CD4-positive, alpha-beta memory T cell (primary cell): ENCODE measurements at regions of chr2 and their contacts with region 1.

Region 1: GRCh38 chr2:38602732-38603401 is at the start of gene HNRNPLL:
- DNase-seq: peak; percentile 92 to 94 (median 92)
- H3K4me3 ChIP-seq: peak within 1 kb of the TSS; percentile 64 to 71
- H3K4me3 Mint-ChIP-seq: peak within 1 kb of the TSS; percentile 96 to 98 (median 98)
- H3K27ac ChIP-seq: peak within 1 kb of the TSS; percentile 89
- H3K27ac Mint-ChIP-seq: peak within 1 kb of the TSS; percentile 81 to 99 (median 97)
- H3K4me1 ChIP-seq: peaks cover 46% of the 10 kb centered on the region
- H3K4me1 Mint-ChIP-seq: peaks cover 28 to 51% (median 40%) of the 10 kb centered on the region in 4 donors
- H3K27me3 ChIP-seq: no peaks in the 10 kb centered on the region
- H3K27me3 Mint-ChIP-seq: peaks cover 0 to 2% of the 10 kb centered on the region in 2 donors
- total RNA-seq, gene HNRNPLL: 103 to 105 TPM

Region 2: DNA sequence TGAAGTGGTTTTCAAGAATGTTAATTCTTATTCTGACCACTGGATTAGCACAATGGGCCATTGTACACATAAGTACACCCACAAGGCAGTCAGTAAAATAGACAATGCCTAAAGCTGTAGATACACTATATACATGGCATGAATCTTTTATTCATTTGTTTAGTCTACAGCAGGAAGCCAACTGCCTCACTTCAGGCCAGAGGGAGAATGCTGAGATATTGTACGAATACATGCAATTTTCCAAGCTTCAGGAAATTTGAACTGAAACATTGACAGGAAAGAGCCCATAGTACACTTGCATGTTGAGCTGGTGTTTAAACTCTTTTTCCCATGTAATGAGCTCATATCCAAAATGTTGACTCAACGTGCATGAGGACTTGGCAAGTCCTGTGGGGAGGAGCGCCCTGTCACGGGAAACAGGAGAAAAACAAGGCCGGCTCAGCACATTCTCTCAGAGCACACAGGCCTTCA is 415.3 kb before region 1 on chr2:
- CTCF ChIA-PET with region 1: no interaction called
- POLR2A ChIA-PET with region 1: no interaction called
- intact Hi-C with region 1: no loop called
- DNase-seq: no peak
- H3K4me3 ChIP-seq: no peak overlapping the region
- H3K4me3 Mint-ChIP-seq: no peak overlapping the region
- H3K27ac ChIP-seq: no peak overlapping the region
- H3K27ac Mint-ChIP-seq: no peak overlapping the region
- H3K4me1 ChIP-seq: no peaks in the 10 kb centered on the region
- H3K4me1 Mint-ChIP-seq: peaks cover 0 to 10% (median 5%) of the 10 kb centered on the region in 4 donors
- H3K27me3 ChIP-seq: no peaks in the 10 kb centered on the region
- H3K27me3 Mint-ChIP-seq: peaks cover 1 to 4% of the 10 kb centered on the region in 2 donors

Region 3: GRCh38 chr2:38535744-38536506 is 66.9 kb before region 1 on chr2:
- CTCF ChIA-PET with region 1: interaction called, 7 read pairs
- POLR2A ChIA-PET with region 1: no interaction called
- intact Hi-C with region 1: loop called (anchors 1 kb)
- DNase-seq: peak; percentile 60 to 77 (median 70)
- H3K4me3 ChIP-seq: peak overlapping the region; percentile 47 to 52
- H3K4me3 Mint-ChIP-seq: peak overlapping the region; percentile 25 to 77 (median 52)
- H3K27ac ChIP-seq: no peak overlapping the region
- H3K27ac Mint-ChIP-seq: peak overlapping the region in 1 of 7 donors; percentile 36
- H3K4me1 ChIP-seq: peaks cover 9% of the 10 kb centered on the region
- H3K4me1 Mint-ChIP-seq: peaks cover 0 to 6% (median 2%) of the 10 kb centered on the region in 4 donors
- H3K27me3 ChIP-seq: no peaks in the 10 kb centered on the region
- H3K27me3 Mint-ChIP-seq: peaks cover 0 to 2% of the 10 kb centered on the region in 2 donors

Region 4: GRCh38 chr2:38626326-38627035 is 23.6 kb after region 1 on chr2:
- CTCF ChIA-PET with region 1: interaction called, 34 read pairs
- POLR2A ChIA-PET with region 1: interaction called, 27 read pairs
- intact Hi-C with region 1: no loop called
- DNase-seq: peak; percentile 56 to 71 (median 64)
- H3K4me3 ChIP-seq: no peak overlapping the region
- H3K4me3 Mint-ChIP-seq: peak overlapping the region in 7 of 8 donors; percentile 22 to 70 (median 57)
- H3K27ac ChIP-seq: peak overlapping the region; percentile 7
- H3K27ac Mint-ChIP-seq: peak overlapping the region; percentile 43 to 89 (median 82)
- H3K4me1 ChIP-seq: peaks cover 21% of the 10 kb centered on the region
- H3K4me1 Mint-ChIP-seq: peaks cover 20 to 29% (median 26%) of the 10 kb centered on the region in 4 donors
- H3K27me3 ChIP-seq: no peaks in the 10 kb centered on the region
- H3K27me3 Mint-ChIP-seq: no peaks in the 10 kb centered on the region

Region 5: GRCh38 chr2:38665854-38666555 is 63.1 kb after region 1 on chr2 and contains the start of gene GALM:
- CTCF ChIA-PET with region 1: interaction called, 99 read pairs
- POLR2A ChIA-PET with region 1: interaction called, 227 read pairs
- intact Hi-C with region 1: loop called (anchors 1 kb)
- DNase-seq: peak; percentile 51 to 68 (median 62)
- H3K4me3 ChIP-seq: peak within 1 kb of the TSS; percentile 63 to 74
- H3K4me3 Mint-ChIP-seq: peak within 1 kb of the TSS; percentile 81 to 97 (median 94)
- H3K27ac ChIP-seq: peak within 1 kb of the TSS; percentile 73
- H3K27ac Mint-ChIP-seq: peak within 1 kb of the TSS; percentile 93 to 100 (median 98)
- H3K4me1 ChIP-seq: peaks cover 73% of the 10 kb centered on the region
- H3K4me1 Mint-ChIP-seq: peaks cover 47 to 80% (median 64%) of the 10 kb centered on the region in 4 donors
- H3K27me3 ChIP-seq: no peaks in the 10 kb centered on the region
- H3K27me3 Mint-ChIP-seq: no peaks in the 10 kb centered on the region
- total RNA-seq, gene GALM: 35.5 to 35.8 TPM

Region 6: GRCh38 chr2:38697125-38697840 is 94.4 kb after region 1 on chr2:
- CTCF ChIA-PET with region 1: interaction called, 25 read pairs
- POLR2A ChIA-PET with region 1: interaction called, 71 read pairs
- intact Hi-C with region 1: no loop called
- DNase-seq: peak; percentile 74 to 87 (median 75)
- H3K4me3 ChIP-seq: peak overlapping the region in 1 of 2 donors; percentile 0
- H3K4me3 Mint-ChIP-seq: peak overlapping the region; percentile 43 to 81 (median 76)
- H3K27ac ChIP-seq: peak overlapping the region; percentile 72
- H3K27ac Mint-ChIP-seq: peak overlapping the region; percentile 93 to 98 (median 97)
- H3K4me1 ChIP-seq: peaks cover 100% of the 10 kb centered on the region
- H3K4me1 Mint-ChIP-seq: peaks cover 52 to 92% (median 74%) of the 10 kb centered on the region in 4 donors
- H3K27me3 ChIP-seq: no peaks in the 10 kb centered on the region
- H3K27me3 Mint-ChIP-seq: no peaks in the 10 kb centered on the region

Region 7: GRCh38 chr2:38720613-38721241 is 117.9 kb after region 1 on chr2:
- CTCF ChIA-PET with region 1: interaction called, 93 read pairs
- POLR2A ChIA-PET with region 1: interaction called, 30 read pairs
- intact Hi-C with region 1: loop called (anchors 1 kb)
- DNase-seq: no peak
- H3K4me3 ChIP-seq: no peak overlapping the region
- H3K4me3 Mint-ChIP-seq: peak overlapping the region in 5 of 8 donors; percentile 22 to 44 (median 29)
- H3K27ac ChIP-seq: no peak overlapping the region
- H3K27ac Mint-ChIP-seq: peak overlapping the region; percentile 75 to 94 (median 89)
- H3K4me1 ChIP-seq: peaks cover 58% of the 10 kb centered on the region
- H3K4me1 Mint-ChIP-seq: peaks cover 39 to 68% (median 54%) of the 10 kb centered on the region in 4 donors
- H3K27me3 ChIP-seq: no peaks in the 10 kb centered on the region
- H3K27me3 Mint-ChIP-seq: no peaks in the 10 kb centered on the region